A673 (cell line): ENCODE measurements at regions of chr9 and their contacts with region 1.

Region 1: DNA sequence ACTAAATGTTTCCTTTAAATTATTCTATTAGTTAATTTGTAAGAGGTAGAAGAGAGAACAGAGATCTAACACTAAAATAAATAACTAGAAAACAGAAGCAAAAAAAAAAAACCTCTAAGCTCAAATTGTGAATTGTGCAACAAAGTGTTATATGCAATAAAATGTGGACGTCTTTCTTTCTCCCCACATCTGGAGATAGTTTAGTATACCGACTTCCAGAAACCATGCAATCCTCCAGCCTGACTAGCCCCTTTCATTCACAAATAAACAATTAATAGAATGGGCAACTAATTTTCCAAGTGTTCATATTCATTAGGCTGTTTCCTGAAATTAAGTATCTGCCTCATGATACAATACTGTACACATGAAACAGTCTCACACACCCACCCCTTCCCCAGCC is 258.5 kb downstream of the BNC2 start:
- DNase-seq: no peak
- H3K4me3 ChIP-seq: no peak overlapping the region
- H3K27ac ChIP-seq: no peak overlapping the region
- H3K4me1 ChIP-seq: no peaks in the 10 kb centered on the region
- H3K27me3 ChIP-seq: no peaks in the 10 kb centered on the region
- CTCF ChIP-seq: no peak

Region 2: DNA sequence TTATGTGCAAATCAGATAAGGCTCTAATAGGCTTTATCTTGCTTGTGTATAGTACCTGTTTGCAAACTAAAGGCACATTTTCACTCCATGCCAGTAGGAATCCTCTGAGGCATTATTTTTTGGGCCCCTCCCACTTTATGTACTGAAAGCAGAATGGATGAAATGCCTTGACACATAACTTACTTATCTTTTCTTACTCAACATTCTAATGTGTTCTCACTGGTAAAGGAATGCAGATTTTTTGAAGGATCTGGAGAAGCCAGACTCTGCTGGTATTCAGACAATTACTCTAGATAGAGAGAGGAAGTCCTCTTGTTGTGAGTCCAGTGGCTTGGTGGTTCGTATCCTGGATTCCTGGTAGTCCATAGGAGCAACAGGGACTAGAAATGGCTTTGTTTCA is 722.4 kb before region 1 on chr9:
- CTCF ChIA-PET with region 1: no interaction called
- POLR2A ChIA-PET with region 1: no interaction called
- intact Hi-C with region 1: loop called (anchors 10 kb)
- DNase-seq: no peak
- H3K4me3 ChIP-seq: no peak overlapping the region
- H3K27ac ChIP-seq: no peak overlapping the region
- H3K4me1 ChIP-seq: no peaks in the 10 kb centered on the region
- H3K27me3 ChIP-seq: no peaks in the 10 kb centered on the region
- CTCF ChIP-seq: no peak

Region 3: GRCh38 chr9:16559418-16560188 is 52.4 kb before region 1 on chr9:
- CTCF ChIA-PET with region 1: no interaction called
- POLR2A ChIA-PET with region 1: no interaction called
- intact Hi-C with region 1: no loop called
- DNase-seq: no peak
- H3K4me3 ChIP-seq: no peak overlapping the region
- H3K27ac ChIP-seq: no peak overlapping the region
- H3K4me1 ChIP-seq: no peaks in the 10 kb centered on the region
- H3K27me3 ChIP-seq: no peaks in the 10 kb centered on the region
- CTCF ChIP-seq: no peak

Region 4: GRCh38 chr9:16809912-16810610 is 198.1 kb after region 1 on chr9:
- CTCF ChIA-PET with region 1: no interaction called
- POLR2A ChIA-PET with region 1: no interaction called
- intact Hi-C with region 1: no loop called
- DNase-seq: no peak
- H3K4me3 ChIP-seq: no peak overlapping the region
- H3K27ac ChIP-seq: no peak overlapping the region
- H3K4me1 ChIP-seq: no peaks in the 10 kb centered on the region
- H3K27me3 ChIP-seq: no peaks in the 10 kb centered on the region
- CTCF ChIP-seq: no peak